ENCODE measurements at regions of chr5 and their contacts with region 1.

Region 1: DNA sequence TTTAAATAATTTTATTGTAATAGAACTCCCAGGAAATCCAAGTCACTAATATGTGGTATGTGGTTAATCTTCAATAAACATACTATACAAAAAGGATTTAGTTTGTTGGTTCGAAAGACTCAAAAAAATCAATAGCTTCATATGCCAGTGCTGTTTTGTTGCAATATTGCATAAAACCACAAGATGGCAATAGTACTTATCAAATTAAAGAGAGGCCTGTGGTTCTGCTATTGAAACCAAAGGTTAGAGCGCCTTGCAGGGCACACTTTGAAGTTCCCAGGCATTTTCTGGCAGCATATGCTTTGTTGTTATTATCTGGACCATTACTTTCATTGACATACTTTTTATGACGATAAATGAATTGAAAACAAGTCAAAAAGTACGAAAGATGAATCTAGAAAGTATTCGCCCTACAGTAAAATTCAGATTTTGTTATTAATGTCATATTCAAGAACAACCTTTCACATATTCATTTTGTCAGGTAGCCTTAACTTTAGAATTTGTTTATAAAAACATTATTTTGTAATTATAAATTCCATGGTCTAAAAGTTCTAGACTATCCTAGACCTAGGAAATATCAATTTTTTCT is 316.3 kb downstream of the MCTP1 start:
- DNase-seq: peak; percentile 36
- H3K4me3 Mint-ChIP-seq: no peak overlapping the region
- H3K27ac Mint-ChIP-seq: no peak overlapping the region
- H3K4me1 Mint-ChIP-seq: no peaks in the 10 kb centered on the region
- H3K27me3 Mint-ChIP-seq: no peaks in the 10 kb centered on the region
- CTCF ChIP-seq: peak; percentile 72

Region 2: DNA sequence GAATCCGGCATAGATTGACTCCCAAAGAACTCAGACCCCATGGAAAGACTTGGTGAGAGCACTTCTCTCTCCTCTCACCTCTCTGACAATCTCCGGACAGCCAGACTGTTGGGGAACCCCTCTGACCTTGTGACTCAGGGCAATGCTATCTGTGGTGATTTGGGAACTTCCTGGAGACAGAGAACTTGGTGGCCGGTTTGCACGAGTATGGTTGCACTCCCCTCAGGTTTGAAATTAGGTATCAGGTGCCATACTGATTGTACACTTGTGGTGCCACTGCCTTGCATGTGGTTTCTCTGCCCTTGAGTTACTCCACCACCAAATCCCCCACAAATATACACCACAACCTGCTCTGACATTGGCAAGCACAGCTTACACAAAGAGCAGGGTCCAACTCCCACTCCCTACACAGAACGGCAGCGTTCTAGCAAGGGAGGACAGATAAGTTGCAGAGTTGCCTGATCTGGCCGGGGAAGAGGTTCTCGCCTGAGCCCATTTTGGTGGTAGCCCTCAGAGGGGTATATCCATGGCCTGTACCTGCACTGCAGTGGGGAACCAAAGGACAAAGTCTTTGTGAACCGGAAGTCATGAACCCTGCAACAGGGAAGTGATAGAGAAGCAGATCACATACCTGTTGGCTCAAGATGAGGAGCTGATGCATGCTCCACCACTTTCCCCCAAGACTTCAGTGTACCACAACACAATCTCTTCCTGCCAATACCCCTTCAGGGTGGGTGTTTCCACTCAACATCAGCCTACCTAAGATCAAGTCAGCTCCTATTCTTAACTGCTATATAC is 61.2 kb after region 1 on chr5:
- CTCF ChIA-PET with region 1: no interaction called
- intact Hi-C with region 1: no loop called
- DNase-seq: peak; percentile 11
- H3K4me3 Mint-ChIP-seq: no peak overlapping the region
- H3K27ac Mint-ChIP-seq: no peak overlapping the region
- H3K4me1 Mint-ChIP-seq: peaks cover 26% of the 10 kb centered on the region
- H3K27me3 Mint-ChIP-seq: no peaks in the 10 kb centered on the region
- CTCF ChIP-seq: no peak

Region 3: DNA sequence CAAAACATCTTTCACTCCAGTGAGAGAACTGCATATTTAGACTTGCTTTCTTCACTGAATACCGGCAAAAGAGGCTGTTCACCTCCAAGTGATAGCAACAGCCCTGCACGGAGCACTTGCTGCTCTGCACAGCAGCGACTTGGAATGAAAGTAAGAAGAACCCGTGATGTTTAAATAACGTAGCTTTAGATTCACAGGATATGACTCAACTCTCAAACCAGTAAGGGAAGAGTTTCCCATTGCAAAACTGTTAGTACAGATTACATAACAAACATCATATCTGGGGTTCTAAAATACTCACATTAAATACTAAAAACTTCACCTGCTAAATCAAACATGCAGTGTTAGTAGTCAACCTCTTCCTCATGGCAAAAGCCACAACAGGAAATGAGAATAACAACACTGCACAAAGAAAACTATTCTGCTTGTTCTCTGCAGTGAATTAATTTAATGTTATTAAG is 112.9 kb after region 1 on chr5:
- CTCF ChIA-PET with region 1: interaction called, 3 read pairs
- intact Hi-C with region 1: loop called (anchors 5 kb)
- DNase-seq: peak; percentile 60
- H3K4me3 Mint-ChIP-seq: peak overlapping the region; percentile 78
- H3K27ac Mint-ChIP-seq: peak overlapping the region; percentile 65
- H3K4me1 Mint-ChIP-seq: peaks cover 34% of the 10 kb centered on the region
- H3K27me3 Mint-ChIP-seq: no peaks in the 10 kb centered on the region
- CTCF ChIP-seq: no peak

Region 4: GRCh38 chr5:95184924-95185323 is 216.3 kb after region 1 on chr5:
- CTCF ChIA-PET with region 1: no interaction called
- intact Hi-C with region 1: loop called (anchors 5 kb)
- DNase-seq: no peak
- H3K4me3 Mint-ChIP-seq: no peak overlapping the region
- H3K27ac Mint-ChIP-seq: no peak overlapping the region
- H3K4me1 Mint-ChIP-seq: no peaks in the 10 kb centered on the region
- H3K27me3 Mint-ChIP-seq: peaks cover 13% of the 10 kb centered on the region
- CTCF ChIP-seq: no peak

Region 5: GRCh38 chr5:95238560-95239325 is 270.1 kb after region 1 on chr5:
- CTCF ChIA-PET with region 1: no interaction called
- intact Hi-C with region 1: loop called (anchors 1 kb)
- DNase-seq: no peak
- H3K4me3 Mint-ChIP-seq: no peak overlapping the region
- H3K27ac Mint-ChIP-seq: no peak overlapping the region
- H3K4me1 Mint-ChIP-seq: peaks cover 9% of the 10 kb centered on the region
- H3K27me3 Mint-ChIP-seq: peaks cover 27% of the 10 kb centered on the region
- CTCF ChIP-seq: no peak

Region 6: GRCh38 chr5:95261437-95262175 is 293.0 kb after region 1 on chr5:
- CTCF ChIA-PET with region 1: interaction called, 8 read pairs
- intact Hi-C with region 1: loop called (anchors 1 kb)
- DNase-seq: peak; percentile 25
- H3K4me3 Mint-ChIP-seq: no peak overlapping the region
- H3K27ac Mint-ChIP-seq: no peak overlapping the region
- H3K4me1 Mint-ChIP-seq: no peaks in the 10 kb centered on the region
- H3K27me3 Mint-ChIP-seq: peaks cover 51% of the 10 kb centered on the region
- CTCF ChIP-seq: peak; percentile 32

Region 7: GRCh38 chr5:95508550-95508949 is 539.9 kb after region 1 on chr5:
- CTCF ChIA-PET with region 1: no interaction called
- intact Hi-C with region 1: loop called (anchors 5 kb)
- DNase-seq: no peak
- H3K4me3 Mint-ChIP-seq: no peak overlapping the region
- H3K27ac Mint-ChIP-seq: no peak overlapping the region
- H3K4me1 Mint-ChIP-seq: peaks cover 8% of the 10 kb centered on the region
- H3K27me3 Mint-ChIP-seq: no peaks in the 10 kb centered on the region
- CTCF ChIP-seq: no peak